ENCODE measurements at regions of chr1 and their contacts with region 1.

Region 1: GRCh38 chr1:161159087-161159912 is at the start of gene USP21:
- DNase-seq: peak; percentile 85 to 95 (median 91)
- ATAC-seq: peak; percentile 89 to 90
- H3K4me3 Mint-ChIP-seq: peak within 1 kb of the TSS; percentile 88 to 97 (median 93)
- H3K27ac Mint-ChIP-seq: peak within 1 kb of the TSS; percentile 89 to 97 (median 96)
- H3K4me1 Mint-ChIP-seq: peaks cover 35 to 76% (median 66%) of the 10 kb centered on the region in 4 donors
- H3K27me3 Mint-ChIP-seq: no peaks in the 10 kb centered on the region
- polyA plus RNA-seq, gene USP21: 13.8 to 31.4 (median 14.6) TPM

Region 2: DNA sequence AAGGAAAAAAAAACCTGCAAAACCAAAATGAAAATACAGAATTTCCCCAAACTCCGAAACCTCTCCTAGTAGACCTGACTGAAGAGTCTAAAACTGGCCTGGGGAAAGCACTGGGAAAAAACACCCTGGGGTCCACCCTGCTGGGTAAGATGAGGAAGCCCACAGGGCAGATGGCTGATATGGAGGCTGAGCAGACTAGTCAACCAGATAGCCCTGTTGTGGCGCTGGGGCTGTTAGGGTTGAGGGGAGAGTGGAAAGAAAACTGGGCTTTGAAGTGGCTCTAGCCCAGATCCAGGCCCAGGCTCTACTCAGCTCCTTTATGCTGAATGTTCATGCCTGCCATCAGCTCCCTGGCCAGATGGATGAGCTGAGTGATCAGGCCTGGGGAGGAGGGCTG is 505.7 kb before region 1 on chr1:
- POLR2A ChIA-PET with region 1: no interaction called
- DNase-seq: no peak
- ATAC-seq: peak in 1 of 2 donors; percentile 50
- H3K4me3 Mint-ChIP-seq: peak overlapping the region in 3 of 10 donors; percentile 8 to 39 (median 18)
- H3K27ac Mint-ChIP-seq: peak overlapping the region in 6 of 10 donors; percentile 15 to 89 (median 57)
- H3K4me1 Mint-ChIP-seq: peaks cover 44 to 85% (median 71%) of the 10 kb centered on the region in 4 donors
- H3K27me3 Mint-ChIP-seq: no peaks in the 10 kb centered on the region

Region 3: GRCh38 chr1:160877221-160877620 is 282.1 kb before region 1 on chr1:
- POLR2A ChIA-PET with region 1: no interaction called
- DNase-seq: peak in 5 of 10 donors; percentile 10 to 70 (median 53)
- ATAC-seq: peak; percentile 90 to 94
- H3K4me3 Mint-ChIP-seq: peak overlapping the region in 4 of 10 donors; percentile 7 to 29 (median 10)
- H3K27ac Mint-ChIP-seq: peak overlapping the region in 3 of 10 donors; percentile 0 to 19 (median 5)
- H3K4me1 Mint-ChIP-seq: peaks cover 16 to 42% (median 32%) of the 10 kb centered on the region in 4 donors
- H3K27me3 Mint-ChIP-seq: no peaks in the 10 kb centered on the region

Region 4: GRCh38 chr1:161117759-161118581 is 41.3 kb before region 1 on chr1 and contains the starts of genes NIT1 and PFDN2:
- POLR2A ChIA-PET with region 1: interaction called, 12 read pairs
- DNase-seq: peak; percentile 76 to 88 (median 83)
- ATAC-seq: peak; percentile 82 to 86
- H3K4me3 Mint-ChIP-seq: peak within 1 kb of the TSS; percentile 91 to 97 (median 95)
- H3K27ac Mint-ChIP-seq: peak within 1 kb of the TSS; percentile 77 to 98 (median 95)
- H3K4me1 Mint-ChIP-seq: peaks cover 36 to 90% (median 68%) of the 10 kb centered on the region in 4 donors
- H3K27me3 Mint-ChIP-seq: no peaks in the 10 kb centered on the region
- polyA plus RNA-seq, gene NIT1: 16.8 to 25.0 (median 18.3) TPM
- polyA plus RNA-seq, gene PFDN2: 74.6 to 91.3 (median 86.0) TPM